PC-9 (cell line): ENCODE measurements at regions of chr14 and their contacts with region 1.

Region 1: DNA sequence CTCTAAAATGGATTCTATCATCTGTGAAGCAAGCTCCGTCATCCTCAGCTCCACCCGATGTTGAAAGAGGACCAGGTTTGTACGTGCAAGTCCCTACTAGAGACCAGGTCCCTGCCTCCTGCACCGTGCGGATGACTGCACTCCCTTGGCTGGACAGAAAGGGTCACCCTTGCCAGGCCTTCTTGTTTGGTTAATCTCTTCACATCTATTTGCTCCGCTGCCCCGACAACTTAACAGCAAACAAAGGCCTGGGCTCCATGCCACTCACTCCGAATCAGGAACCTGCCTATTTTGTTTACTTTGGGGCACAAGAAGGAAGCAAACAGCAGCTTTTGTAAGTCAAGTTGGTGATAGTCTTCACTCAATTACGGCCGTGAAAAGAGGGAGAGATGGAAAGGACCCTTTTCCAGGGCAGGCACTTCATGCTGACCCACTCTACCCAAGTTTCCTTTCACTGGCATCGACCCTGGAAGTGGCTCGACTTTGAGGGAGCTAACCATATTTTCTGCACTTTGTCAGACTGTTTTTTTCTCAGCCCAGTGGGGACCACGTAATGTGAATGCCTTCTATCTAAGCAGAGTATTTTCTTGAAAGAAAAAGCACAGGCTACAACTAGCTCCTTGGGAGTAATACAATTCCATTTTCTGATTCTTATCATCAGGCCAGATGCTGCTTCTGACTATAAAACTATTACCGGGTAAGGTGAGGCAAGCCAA is 202.7 kb downstream of the FOXN3 start:
- DNase-seq: peak; percentile 56 to 66
- H3K4me3 ChIP-seq: no peak overlapping the region
- H3K27ac ChIP-seq: no peak overlapping the region
- H3K4me1 ChIP-seq: no peaks in the 10 kb centered on the region
- H3K27me3 ChIP-seq: peaks cover 36% of the 10 kb centered on the region
- CTCF ChIP-seq: no peak

Region 2: DNA sequence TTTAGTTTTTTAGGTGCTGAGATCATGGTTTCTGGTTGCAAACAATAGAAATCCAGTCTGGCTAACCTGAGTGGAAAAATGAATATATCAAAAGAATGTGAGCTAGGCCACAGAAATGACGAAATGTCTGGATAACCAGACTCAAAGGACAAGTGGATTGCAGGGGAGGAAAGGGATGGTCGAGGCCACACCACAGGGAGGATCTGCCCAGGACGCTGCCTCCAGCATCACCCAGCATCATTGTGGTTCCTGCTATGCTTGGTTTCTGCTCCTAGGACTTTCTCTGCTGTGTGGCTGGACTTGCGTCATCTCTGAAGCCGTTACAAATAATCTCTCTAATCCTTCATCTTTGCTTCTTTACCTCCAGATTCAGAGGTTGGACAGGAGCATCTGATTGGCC is 309.5 kb before region 1 on chr14:
- CTCF ChIA-PET with region 1: no interaction called
- POLR2A ChIA-PET with region 1: no interaction called
- intact Hi-C with region 1: no loop called
- DNase-seq: no peak
- H3K4me3 ChIP-seq: no peak overlapping the region
- H3K27ac ChIP-seq: no peak overlapping the region
- H3K4me1 ChIP-seq: no peaks in the 10 kb centered on the region
- H3K27me3 ChIP-seq: no peaks in the 10 kb centered on the region
- CTCF ChIP-seq: no peak

Region 3: DNA sequence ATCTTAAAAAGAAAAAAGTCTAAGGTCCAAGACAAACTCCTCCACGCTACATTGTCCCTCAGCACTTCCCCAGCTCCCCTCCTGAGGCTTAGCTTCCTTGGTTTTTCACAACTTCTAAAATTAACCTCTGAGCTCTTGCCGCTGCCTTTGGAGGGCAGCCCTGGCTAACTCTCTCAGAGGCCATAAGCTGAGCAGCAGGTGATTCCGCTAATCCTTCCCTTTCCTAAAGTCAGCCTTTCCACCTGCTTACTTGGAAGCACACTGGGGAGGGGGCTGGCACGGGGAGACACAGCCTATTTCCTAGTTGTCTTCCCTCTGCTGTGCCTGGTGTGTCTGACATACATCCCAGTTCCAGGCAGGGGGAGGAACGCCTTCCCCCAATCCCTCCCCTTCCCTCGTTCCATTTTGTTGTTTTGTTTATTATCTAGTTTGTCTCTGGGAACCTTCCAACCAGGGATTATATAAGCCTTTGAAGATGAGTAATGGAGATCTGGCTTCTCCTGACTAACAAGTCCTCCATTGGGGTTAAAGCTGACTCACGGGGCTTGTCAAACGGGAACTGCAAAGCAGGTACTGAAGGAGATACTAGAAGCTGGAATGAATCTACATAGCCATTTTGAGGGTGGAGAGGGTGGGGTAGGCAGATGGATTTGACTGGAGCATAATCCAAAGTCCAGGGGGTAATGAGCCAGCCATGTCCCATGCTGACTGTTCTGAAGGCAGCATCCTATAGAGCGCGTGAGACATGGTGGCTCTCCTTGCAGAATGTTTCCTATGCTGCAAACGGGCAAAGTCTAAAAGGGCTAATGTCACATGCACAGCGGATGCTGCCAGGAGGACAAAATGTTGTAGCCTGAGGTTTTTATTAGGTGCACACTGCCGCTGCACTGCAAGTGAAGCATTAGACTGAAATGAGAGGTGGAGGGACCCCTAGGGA is 28.2 kb before region 1 on chr14:
- CTCF ChIA-PET with region 1: no interaction called
- POLR2A ChIA-PET with region 1: no interaction called
- intact Hi-C with region 1: loop called (anchors 2 kb)
- DNase-seq: peak; percentile 34 to 51
- H3K4me3 ChIP-seq: no peak overlapping the region
- H3K27ac ChIP-seq: no peak overlapping the region
- H3K4me1 ChIP-seq: no peaks in the 10 kb centered on the region
- H3K27me3 ChIP-seq: peaks cover 15% of the 10 kb centered on the region; the same call in 1 of the 2 replicates
- CTCF ChIP-seq: no peak

Region 4: GRCh38 chr14:89226801-89227495 is 12.6 kb after region 1 on chr14:
- CTCF ChIA-PET with region 1: no interaction called
- POLR2A ChIA-PET with region 1: no interaction called
- intact Hi-C with region 1: no loop called
- DNase-seq: no peak
- H3K4me3 ChIP-seq: no peak overlapping the region
- H3K27ac ChIP-seq: no peak overlapping the region
- H3K4me1 ChIP-seq: no peaks in the 10 kb centered on the region
- H3K27me3 ChIP-seq: peaks cover 70% of the 10 kb centered on the region
- CTCF ChIP-seq: no peak

Region 5: DNA sequence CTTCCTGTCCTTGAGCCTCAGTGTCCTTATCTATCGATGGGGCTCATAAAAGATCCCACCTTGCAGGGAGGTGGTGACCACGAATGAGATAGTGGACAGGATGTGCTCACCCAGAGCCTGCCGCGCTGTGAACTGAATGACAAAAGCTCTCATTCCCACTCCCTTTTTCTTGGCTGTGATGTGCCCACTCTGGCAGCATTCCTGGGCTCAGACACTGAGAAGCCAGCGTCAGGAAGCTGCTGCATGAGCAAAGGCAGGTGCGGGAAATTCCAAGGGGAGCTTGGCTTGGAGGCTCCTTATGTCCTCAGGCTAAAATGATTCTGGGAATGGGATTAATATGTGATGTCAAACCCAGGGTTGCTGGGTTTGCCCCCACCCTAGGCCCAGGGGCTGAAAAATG is 678.6 kb after region 1 on chr14:
- CTCF ChIA-PET with region 1: no interaction called
- POLR2A ChIA-PET with region 1: no interaction called
- intact Hi-C with region 1: no loop called
- DNase-seq: no peak
- H3K4me3 ChIP-seq: no peak overlapping the region
- H3K27ac ChIP-seq: no peak overlapping the region
- H3K4me1 ChIP-seq: no peaks in the 10 kb centered on the region
- H3K27me3 ChIP-seq: no peaks in the 10 kb centered on the region
- CTCF ChIP-seq: no peak